Activated T-helper 2 cell treated with anti-CD3 and anti-CD28 coated beads, Interferon-gamma antibody, Interleukin-2, Interleukin-4, amounts not matched to agents 10 μg/mL and 5 μg/mL and 100 μg/mL, durations not matched to agents 14 hours and 24 hours and 36 hours (primary cell): ENCODE measurements at regions of chr4 and their contacts with region 1.

Region 1: DNA sequence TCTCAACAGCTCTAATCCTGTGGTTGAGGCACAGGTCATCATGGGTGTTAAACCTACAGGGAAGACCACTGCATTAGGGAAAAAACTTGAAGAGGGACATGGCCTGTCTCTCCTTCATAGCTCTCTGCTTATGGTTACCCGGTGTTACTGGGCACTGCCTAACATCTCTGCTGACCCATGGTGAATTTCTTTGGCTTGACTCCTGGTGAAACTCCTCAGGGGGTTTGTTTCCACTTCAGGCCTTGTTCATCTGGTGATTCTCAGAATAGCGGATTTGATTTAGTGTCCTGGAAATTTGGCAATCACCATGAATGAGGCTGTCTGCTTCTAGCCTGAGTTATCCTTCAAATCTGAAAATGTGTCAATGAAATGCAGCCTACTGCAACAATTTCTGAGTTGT is 114.4 kb downstream of the ZNF518B start:
- DNase-seq: no peak
- H3K4me3 Mint-ChIP-seq: no peak overlapping the region
- H3K27ac Mint-ChIP-seq: no peak overlapping the region
- H3K4me1 Mint-ChIP-seq: no peaks in the 10 kb centered on the region
- H3K27me3 Mint-ChIP-seq: peaks cover 4% of the 10 kb centered on the region

Region 2: GRCh38 chr4:10326075-10326474 is 16.8 kb before region 1 on chr4:
- intact Hi-C with region 1: no loop called
- DNase-seq: no peak
- H3K4me3 Mint-ChIP-seq: no peak overlapping the region
- H3K27ac Mint-ChIP-seq: no peak overlapping the region
- H3K4me1 Mint-ChIP-seq: no peaks in the 10 kb centered on the region
- H3K27me3 Mint-ChIP-seq: no peaks in the 10 kb centered on the region

Region 3: DNA sequence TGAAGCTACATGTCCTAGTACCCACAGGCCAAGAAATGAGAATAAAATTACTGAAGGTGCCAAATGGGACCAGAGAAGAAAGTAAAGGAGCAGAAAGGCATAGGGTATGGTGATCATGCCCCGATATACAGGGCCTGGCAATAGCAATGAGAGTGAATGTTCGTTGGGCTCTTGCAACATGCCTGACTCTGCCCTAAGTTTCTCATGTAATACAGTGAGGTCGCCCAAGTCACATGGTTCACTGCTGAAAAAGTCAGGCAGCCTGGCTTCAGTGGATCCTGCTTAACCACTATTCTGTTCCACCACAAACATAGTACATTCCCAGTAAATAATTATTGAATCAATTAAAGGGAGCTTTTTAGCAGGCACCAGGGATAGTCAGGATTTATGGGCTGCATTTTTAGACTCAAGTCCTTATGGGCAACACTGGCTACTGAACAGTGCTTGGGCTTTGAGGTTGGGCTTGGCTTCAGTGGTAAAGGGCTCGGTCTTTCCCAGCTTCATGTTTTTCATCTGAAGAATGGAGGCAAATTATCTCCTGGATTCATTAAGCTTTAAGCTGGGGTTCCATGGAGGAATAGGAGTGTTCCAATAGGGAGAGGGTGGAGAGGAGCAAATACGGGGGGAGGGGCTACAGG is 181.4 kb after region 1 on chr4:
- intact Hi-C with region 1: no loop called
- DNase-seq: no peak
- H3K4me3 Mint-ChIP-seq: no peak overlapping the region
- H3K27ac Mint-ChIP-seq: no peak overlapping the region
- H3K4me1 Mint-ChIP-seq: no peaks in the 10 kb centered on the region
- H3K27me3 Mint-ChIP-seq: peaks cover 5% of the 10 kb centered on the region

Region 4: GRCh38 chr4:10535912-10536311 is 193.0 kb after region 1 on chr4:
- intact Hi-C with region 1: loop called (anchors 5 kb)
- DNase-seq: no peak
- H3K4me3 Mint-ChIP-seq: no peak overlapping the region
- H3K27ac Mint-ChIP-seq: no peak overlapping the region
- H3K4me1 Mint-ChIP-seq: no peaks in the 10 kb centered on the region
- H3K27me3 Mint-ChIP-seq: peaks cover 9% of the 10 kb centered on the region